ENCODE measurements at regions of chr4 and their contacts with region 1.

Region 1: DNA sequence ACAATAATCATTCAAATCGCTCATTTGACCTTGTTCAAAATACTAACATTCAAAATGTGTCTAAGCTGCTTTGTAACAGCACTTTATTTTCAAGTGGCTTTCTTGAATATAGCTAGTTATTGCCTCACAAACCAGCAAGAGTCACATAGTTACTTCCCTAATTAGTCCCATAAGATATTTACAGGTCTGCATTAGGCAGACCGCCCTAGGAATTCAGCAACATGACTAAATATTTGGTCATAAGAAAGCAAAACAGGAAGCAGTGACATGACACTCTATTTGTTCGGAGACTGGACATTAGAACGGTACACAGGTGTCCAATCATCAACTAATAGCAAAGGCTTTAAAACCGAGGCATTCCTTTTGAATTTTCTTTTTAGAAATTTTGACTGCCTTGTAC is 262.0 kb downstream of the COL25A1 start:
- DNase-seq: no peak
- ATAC-seq: no peak
- H3K4me3 ChIP-seq: no peak overlapping the region
- H3K27ac ChIP-seq: no peak overlapping the region
- H3K4me1 ChIP-seq: no peaks in the 10 kb centered on the region
- H3K27me3 ChIP-seq: no peaks in the 10 kb centered on the region
- CTCF ChIP-seq: no peak
- POLR2A ChIP-seq: no peak

Region 2: GRCh38 chr4:109015413-109015810 is 25.0 kb before region 1 on chr4:
- in situ Hi-C with region 1: no loop called
- intact Hi-C with region 1: loop called (anchors 2 kb)
- DNase-seq: no peak
- ATAC-seq: no peak
- H3K4me3 ChIP-seq: no peak overlapping the region
- H3K27ac ChIP-seq: no peak overlapping the region
- H3K4me1 ChIP-seq: peaks cover 5 to 8% of the 10 kb centered on the region in 2 donors
- H3K27me3 ChIP-seq: no peaks in the 10 kb centered on the region
- CTCF ChIP-seq: no peak
- POLR2A ChIP-seq: no peak